MCF 10A (cell line): ENCODE measurements at regions of chr5 and their contacts with region 1.

Region 1: DNA sequence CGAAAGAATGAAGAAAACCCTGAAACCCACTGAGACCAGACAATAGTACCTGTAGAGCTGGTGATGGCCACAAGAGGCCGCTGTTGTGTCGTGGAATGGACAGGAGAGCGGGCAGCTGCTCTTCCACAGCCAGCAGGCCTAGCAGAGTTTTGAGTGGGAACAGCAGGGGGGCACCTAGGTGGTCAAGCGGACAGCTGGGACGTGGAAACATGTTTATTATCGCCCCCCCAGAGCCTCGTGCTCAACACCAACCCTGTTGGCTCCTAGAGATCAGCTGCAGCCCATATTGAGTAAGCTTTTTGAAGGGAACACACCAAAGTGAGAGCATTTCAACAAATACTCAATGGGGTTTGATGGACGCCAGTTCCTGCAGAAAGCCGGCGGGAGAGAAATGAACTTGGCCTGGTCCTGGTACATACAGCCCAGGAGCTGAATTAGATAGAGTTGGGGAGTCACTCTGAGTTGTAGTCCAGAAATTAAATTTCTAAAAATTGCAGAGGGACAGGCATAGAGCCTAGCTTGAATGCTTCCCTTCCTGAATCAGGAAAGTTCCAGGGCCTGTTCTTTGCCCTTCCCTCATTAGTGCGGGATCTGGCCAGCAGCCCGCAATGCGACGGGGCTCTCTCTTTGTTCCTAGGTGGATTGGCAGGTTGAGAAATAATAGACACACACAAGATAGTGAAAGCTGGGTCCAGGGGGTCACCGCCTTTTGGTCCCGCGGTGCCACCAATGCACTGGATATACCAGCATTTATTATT is 33.8 kb downstream of the MFAP3 start:
- DNase-seq: peak; percentile 87
- H3K4me3 Mint-ChIP-seq: no peak overlapping the region
- H3K27ac Mint-ChIP-seq: no peak overlapping the region
- H3K4me1 Mint-ChIP-seq: peaks cover 5% of the 10 kb centered on the region
- H3K27me3 Mint-ChIP-seq: no peaks in the 10 kb centered on the region
- CTCF ChIP-seq: peak; percentile 99

Region 2: DNA sequence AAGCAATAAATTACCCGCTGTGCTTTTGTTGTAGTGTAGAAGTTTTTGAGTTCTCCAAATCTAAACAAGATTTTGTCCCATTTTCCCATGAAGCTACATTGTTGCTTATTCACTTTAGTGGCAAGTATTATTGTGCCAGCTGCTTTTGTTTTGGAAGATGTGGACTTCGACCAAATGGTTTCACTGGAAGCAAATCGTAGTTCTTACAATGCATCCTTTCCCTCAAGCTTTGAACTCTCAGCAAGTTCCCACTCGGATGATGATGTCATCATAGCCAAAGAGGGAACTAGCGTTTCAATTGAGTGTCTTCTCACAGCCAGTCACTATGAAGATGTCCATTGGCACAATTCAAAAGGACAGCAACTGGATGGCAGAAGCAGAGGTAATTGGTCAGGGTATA is 23.0 kb before region 1 on chr5:
- CTCF ChIA-PET with region 1: interaction called, 53 read pairs
- POLR2A ChIA-PET with region 1: no interaction called
- intact Hi-C with region 1: no loop called
- DNase-seq: no peak
- H3K4me3 Mint-ChIP-seq: no peak overlapping the region
- H3K27ac Mint-ChIP-seq: no peak overlapping the region
- H3K4me1 Mint-ChIP-seq: peaks cover 11% of the 10 kb centered on the region
- H3K27me3 Mint-ChIP-seq: no peaks in the 10 kb centered on the region
- CTCF ChIP-seq: no peak

Region 3: DNA sequence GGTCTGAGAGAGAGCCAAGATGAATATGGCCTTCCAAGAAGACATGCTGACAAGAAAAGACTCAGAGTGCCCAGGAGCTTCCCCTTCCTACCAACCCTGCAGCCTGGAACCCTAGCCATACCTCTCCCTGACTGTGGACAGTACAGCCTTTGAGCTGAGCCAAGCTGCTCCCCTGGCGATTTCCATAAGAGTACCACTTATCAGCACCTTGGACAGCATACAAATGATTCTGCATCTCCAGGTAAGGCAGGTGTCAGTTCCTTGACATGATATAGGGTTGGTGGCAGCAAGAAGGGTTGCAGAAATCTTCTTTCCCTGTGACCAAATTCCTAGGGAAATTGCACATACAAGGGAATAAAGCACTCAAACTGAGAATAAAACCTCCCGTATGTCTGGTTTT is 24.4 kb after region 1 on chr5:
- CTCF ChIA-PET with region 1: interaction called, 12 read pairs
- POLR2A ChIA-PET with region 1: interaction called, 3 read pairs
- intact Hi-C with region 1: no loop called
- DNase-seq: peak; percentile 65
- H3K4me3 Mint-ChIP-seq: no peak overlapping the region
- H3K27ac Mint-ChIP-seq: no peak overlapping the region
- H3K4me1 Mint-ChIP-seq: no peaks in the 10 kb centered on the region
- H3K27me3 Mint-ChIP-seq: peaks cover 24% of the 10 kb centered on the region
- CTCF ChIP-seq: no peak

Region 4: DNA sequence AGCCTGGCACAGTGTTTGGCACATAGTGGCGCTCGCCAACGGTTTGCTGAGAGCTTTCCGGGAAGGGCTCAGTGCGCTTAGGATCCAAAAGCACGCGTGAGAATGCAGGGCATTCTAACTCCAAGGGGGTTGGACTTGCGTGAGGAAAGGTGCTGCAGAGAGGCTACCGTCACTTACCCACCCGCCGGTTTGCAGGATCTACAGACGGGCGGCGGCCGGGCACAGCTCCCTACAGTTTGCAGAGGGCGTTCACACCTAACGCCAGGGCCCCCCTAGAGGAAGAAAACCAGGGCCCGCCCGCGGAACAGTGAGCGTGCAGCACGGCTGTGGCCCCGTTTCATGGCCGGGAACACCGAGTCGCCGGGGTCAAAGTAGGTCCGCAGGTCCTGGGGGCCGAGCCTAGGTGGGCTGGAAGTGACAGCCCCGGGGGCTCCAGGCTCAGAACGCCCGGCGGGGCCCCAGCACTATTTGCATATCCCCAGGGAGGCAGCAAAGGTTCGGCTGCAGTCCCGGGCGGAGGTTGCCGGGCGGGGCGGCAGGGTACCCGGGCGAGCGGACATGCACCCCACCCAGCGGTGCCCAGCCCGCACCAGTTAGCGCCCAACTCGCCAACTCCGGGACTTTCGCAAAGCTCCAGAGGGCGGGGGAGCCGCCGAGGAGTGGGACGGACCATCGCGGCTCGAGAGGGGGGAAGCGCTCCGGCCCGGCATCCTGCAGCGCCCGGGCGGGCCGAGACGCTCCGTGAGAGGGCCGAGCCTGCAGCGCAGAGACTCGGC is 117.4 kb after region 1 on chr5:
- CTCF ChIA-PET with region 1: interaction called, 355 read pairs
- POLR2A ChIA-PET with region 1: interaction called, 7 read pairs
- intact Hi-C with region 1: no loop called
- DNase-seq: peak; percentile 93
- H3K4me3 Mint-ChIP-seq: peak overlapping the region; percentile 81
- H3K27ac Mint-ChIP-seq: peak overlapping the region; percentile 15
- H3K4me1 Mint-ChIP-seq: peaks cover 44% of the 10 kb centered on the region
- H3K27me3 Mint-ChIP-seq: no peaks in the 10 kb centered on the region
- CTCF ChIP-seq: peak; percentile 56

Region 5: GRCh38 chr5:154249826-154250225 is 177.2 kb after region 1 on chr5:
- CTCF ChIA-PET with region 1: no interaction called
- POLR2A ChIA-PET with region 1: no interaction called
- intact Hi-C with region 1: no loop called
- DNase-seq: no peak
- H3K4me3 Mint-ChIP-seq: no peak overlapping the region
- H3K27ac Mint-ChIP-seq: no peak overlapping the region
- H3K4me1 Mint-ChIP-seq: peaks cover 4% of the 10 kb centered on the region
- H3K27me3 Mint-ChIP-seq: no peaks in the 10 kb centered on the region
- CTCF ChIP-seq: no peak

Region 6: DNA sequence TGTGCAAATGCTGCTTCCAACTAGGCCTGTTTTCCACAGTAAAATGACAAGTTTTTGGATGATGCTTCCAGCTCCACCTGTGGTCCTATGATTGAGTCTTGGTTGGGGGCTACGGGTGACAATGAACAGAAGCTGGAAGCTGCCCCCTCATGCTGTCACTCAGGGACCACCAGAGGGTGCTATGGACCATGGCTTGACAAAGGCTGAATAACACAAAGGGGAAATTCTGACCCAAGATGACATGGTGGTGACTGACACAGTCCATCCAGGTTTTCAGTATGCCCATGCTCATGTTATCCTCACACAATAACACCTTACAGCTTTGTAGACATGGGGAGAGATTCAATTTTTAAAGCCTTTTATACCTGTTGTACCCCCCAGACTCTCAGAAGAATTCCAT is 349.3 kb after region 1 on chr5:
- CTCF ChIA-PET with region 1: interaction called, 10 read pairs
- POLR2A ChIA-PET with region 1: no interaction called
- intact Hi-C with region 1: no loop called
- DNase-seq: peak; percentile 45
- H3K4me3 Mint-ChIP-seq: no peak overlapping the region
- H3K27ac Mint-ChIP-seq: no peak overlapping the region
- H3K4me1 Mint-ChIP-seq: no peaks in the 10 kb centered on the region
- H3K27me3 Mint-ChIP-seq: no peaks in the 10 kb centered on the region
- CTCF ChIP-seq: peak; percentile 24